CD14-positive monocyte (primary cell): ENCODE measurements at regions of chr12 and their contacts with region 1.

Region 1: GRCh38 chr12:54368709-54369583 is 4.7 kb upstream of the GPR84 start:
- DNase-seq: peak; percentile 81 to 89 (median 83)
- H3K4me3 ChIP-seq: peak overlapping the region in 2 of 3 experiments; percentile 5 to 66
- H3K4me3 Mint-ChIP-seq: peak overlapping the region; percentile 64 to 80
- H3K27ac ChIP-seq: peak overlapping the region; percentile 42 to 76
- H3K27ac Mint-ChIP-seq: peak overlapping the region; percentile 76 to 93 (median 86)
- H3K4me1 ChIP-seq: peaks cover 57 to 72% of the 10 kb centered on the region in 2 donors
- H3K4me1 Mint-ChIP-seq: peaks cover 72% of the 10 kb centered on the region
- H3K27me3 ChIP-seq: no peaks in the 10 kb centered on the region
- H3K27me3 Mint-ChIP-seq: peaks cover 0 to 2% (median 2%) of the 10 kb centered on the region in 3 donors
- CTCF ChIP-seq: peak; percentile 81

Region 2: GRCh38 chr12:54154681-54155186 is 214.2 kb before region 1 on chr12:
- intact Hi-C with region 1: no loop called
- DNase-seq: no peak
- H3K4me3 ChIP-seq: no peak overlapping the region
- H3K4me3 Mint-ChIP-seq: no peak overlapping the region
- H3K27ac ChIP-seq: no peak overlapping the region
- H3K27ac Mint-ChIP-seq: no peak overlapping the region
- H3K4me1 ChIP-seq: no peaks in the 10 kb centered on the region
- H3K4me1 Mint-ChIP-seq: no peaks in the 10 kb centered on the region
- H3K27me3 ChIP-seq: peaks cover 4 to 52% of the 10 kb centered on the region in 2 donors
- H3K27me3 Mint-ChIP-seq: peaks cover 39 to 58% (median 50%) of the 10 kb centered on the region in 3 donors
- CTCF ChIP-seq: no peak

Region 3: DNA sequence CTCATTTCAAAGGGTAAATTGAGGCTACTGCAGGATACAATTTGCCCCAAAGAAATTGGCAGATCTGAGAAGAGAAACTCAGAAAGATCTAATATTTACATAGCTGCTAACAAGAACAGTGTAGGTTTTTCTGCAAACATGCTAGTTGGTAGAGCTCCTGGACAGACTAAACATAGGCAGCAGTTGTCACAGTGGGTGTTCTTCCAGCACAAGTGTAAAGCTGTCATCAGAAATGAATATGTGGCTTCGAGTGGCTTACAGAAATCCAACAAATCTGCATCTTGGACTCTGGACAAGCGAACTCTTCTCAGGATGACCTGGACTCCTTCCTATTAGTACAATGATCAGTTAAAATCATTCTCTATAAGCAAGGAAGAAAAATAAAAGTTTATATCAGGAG is 95.0 kb before region 1 on chr12:
- intact Hi-C with region 1: no loop called
- DNase-seq: no peak
- H3K4me3 ChIP-seq: no peak overlapping the region
- H3K4me3 Mint-ChIP-seq: no peak overlapping the region
- H3K27ac ChIP-seq: no peak overlapping the region
- H3K27ac Mint-ChIP-seq: no peak overlapping the region
- H3K4me1 ChIP-seq: peaks cover 22 to 26% of the 10 kb centered on the region in 2 donors
- H3K4me1 Mint-ChIP-seq: peaks cover 18% of the 10 kb centered on the region
- H3K27me3 ChIP-seq: no peaks in the 10 kb centered on the region
- H3K27me3 Mint-ChIP-seq: peaks cover 0 to 1% (median 0%) of the 10 kb centered on the region in 3 donors
- CTCF ChIP-seq: no peak

Region 4: GRCh38 chr12:54294152-54294952 is 74.6 kb before region 1 on chr12:
- intact Hi-C with region 1: loop called (anchors 2 to 5 kb)
- DNase-seq: peak; percentile 63 to 75 (median 73)
- H3K4me3 ChIP-seq: peak overlapping the region in 1 of 3 experiments; percentile 99
- H3K4me3 Mint-ChIP-seq: peak overlapping the region; percentile 74 to 99
- H3K27ac ChIP-seq: peak overlapping the region; percentile 51 to 87
- H3K27ac Mint-ChIP-seq: peak overlapping the region; percentile 85 to 92 (median 88)
- H3K4me1 ChIP-seq: peaks cover 95 to 100% of the 10 kb centered on the region in 2 donors
- H3K4me1 Mint-ChIP-seq: peaks cover 89% of the 10 kb centered on the region
- H3K27me3 ChIP-seq: no peaks in the 10 kb centered on the region
- H3K27me3 Mint-ChIP-seq: no peaks in the 10 kb centered on the region
- CTCF ChIP-seq: peak; percentile 94

Region 5: GRCh38 chr12:54300732-54301427 is 68.1 kb before region 1 on chr12 and contains the start of gene NFE2:
- intact Hi-C with region 1: loop called in 1 of 2 experiments (anchors 5 kb)
- DNase-seq: peak; percentile 65 to 75 (median 66)
- H3K4me3 ChIP-seq: peak within 1 kb of the TSS; percentile 80 to 99 (median 93)
- H3K4me3 Mint-ChIP-seq: peak within 1 kb of the TSS; percentile 86 to 99
- H3K27ac ChIP-seq: peak within 1 kb of the TSS; percentile 63 to 87
- H3K27ac Mint-ChIP-seq: peak within 1 kb of the TSS; percentile 90 to 93 (median 91)
- H3K4me1 ChIP-seq: peaks cover 84 to 97% of the 10 kb centered on the region in 2 donors
- H3K4me1 Mint-ChIP-seq: peaks cover 79% of the 10 kb centered on the region
- H3K27me3 ChIP-seq: no peaks in the 10 kb centered on the region
- H3K27me3 Mint-ChIP-seq: peaks cover 0 to 1% (median 1%) of the 10 kb centered on the region in 3 donors
- CTCF ChIP-seq: no peak
- polyA plus RNA-seq, gene NFE2: 79.5 to 157 (median 95.6) TPM

Region 6: DNA sequence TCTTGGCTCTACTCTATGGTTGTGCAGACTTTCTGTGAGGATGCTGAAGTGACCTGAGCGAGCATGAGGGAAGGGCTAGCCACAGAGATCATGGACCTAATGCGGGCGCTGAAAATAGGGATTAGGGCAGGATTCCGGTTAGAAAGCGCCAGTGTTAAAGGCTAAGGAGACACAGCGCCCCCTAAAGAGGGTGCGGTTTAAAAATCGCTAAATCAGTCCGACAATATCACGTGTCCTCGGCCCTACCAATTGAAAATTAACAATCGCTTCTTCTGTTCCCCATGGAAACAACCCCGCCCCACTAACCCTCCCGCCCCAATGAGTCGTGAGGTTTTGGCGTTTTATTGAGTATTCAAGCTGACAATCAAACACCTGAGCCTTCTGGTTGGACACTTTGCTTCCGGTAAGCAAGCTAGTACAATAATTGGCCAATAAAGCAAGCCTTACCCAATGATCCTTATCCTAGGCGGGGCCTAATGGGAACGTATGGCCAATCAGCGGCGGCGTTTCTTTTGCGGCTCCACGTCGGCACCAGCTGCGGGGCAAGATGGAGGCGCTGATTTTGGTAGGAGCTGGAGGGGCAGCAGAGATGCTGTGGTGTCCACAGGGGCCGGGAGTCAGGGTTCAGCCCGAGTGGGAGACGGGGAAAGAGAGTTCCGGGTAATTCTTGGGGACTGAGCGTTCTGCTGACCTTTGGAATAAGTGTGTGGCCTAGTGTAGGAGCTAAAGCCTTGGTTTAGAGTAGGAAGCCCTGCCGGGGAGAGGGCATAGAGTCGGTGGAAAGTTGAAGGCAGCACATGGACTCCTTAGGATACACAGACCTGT is 44.1 kb before region 1 on chr12 and contains the start of gene COPZ1:
- intact Hi-C with region 1: loop called in 1 of 2 experiments (anchors 5 kb)
- DNase-seq: peak; percentile 98 to 99 (median 99)
- H3K4me3 ChIP-seq: peak within 1 kb of the TSS; percentile 50 to 96 (median 79)
- H3K4me3 Mint-ChIP-seq: peak within 1 kb of the TSS; percentile 95 to 99
- H3K27ac ChIP-seq: peak within 1 kb of the TSS; percentile 67 to 86
- H3K27ac Mint-ChIP-seq: peak within 1 kb of the TSS; percentile 98 to 99 (median 99)
- H3K4me1 ChIP-seq: peaks cover 49 to 68% of the 10 kb centered on the region in 2 donors
- H3K4me1 Mint-ChIP-seq: peaks cover 57% of the 10 kb centered on the region
- H3K27me3 ChIP-seq: no peaks in the 10 kb centered on the region
- H3K27me3 Mint-ChIP-seq: no peaks in the 10 kb centered on the region
- CTCF ChIP-seq: peak; percentile 87
- polyA plus RNA-seq, gene COPZ1: 78.9 to 190 (median 176) TPM

Region 7: GRCh38 chr12:54337280-54337842 is 31.6 kb before region 1 on chr12:
- intact Hi-C with region 1: loop called in 1 of 2 experiments (anchors 5 kb)
- DNase-seq: peak in 2 of 3 donors; percentile 23 to 27
- H3K4me3 ChIP-seq: no peak overlapping the region
- H3K4me3 Mint-ChIP-seq: no peak overlapping the region
- H3K27ac ChIP-seq: no peak overlapping the region
- H3K27ac Mint-ChIP-seq: peak overlapping the region in 5 of 7 donors; percentile 7 to 85 (median 59)
- H3K4me1 ChIP-seq: peaks cover 11 to 16% of the 10 kb centered on the region in 2 donors
- H3K4me1 Mint-ChIP-seq: peaks cover 24% of the 10 kb centered on the region
- H3K27me3 ChIP-seq: no peaks in the 10 kb centered on the region
- H3K27me3 Mint-ChIP-seq: no peaks in the 10 kb centered on the region
- CTCF ChIP-seq: no peak

Region 8: DNA sequence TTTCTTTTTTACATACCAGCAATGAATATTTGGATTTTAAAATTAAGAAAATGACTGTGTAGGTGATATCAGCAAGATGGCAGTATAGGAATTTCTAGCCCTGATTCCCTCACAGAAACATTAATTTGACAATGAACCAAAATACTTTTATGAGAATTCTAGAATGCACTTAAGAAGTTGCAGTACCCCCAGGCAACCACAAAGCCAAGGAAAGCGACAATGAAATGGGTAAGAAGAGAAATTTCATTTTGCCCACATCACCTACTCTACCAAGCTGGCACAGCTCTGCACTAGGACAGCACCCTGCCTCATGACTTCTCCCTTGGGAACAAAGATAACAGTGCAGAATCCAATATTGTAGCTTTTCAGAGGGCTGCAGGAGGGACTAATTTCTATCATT is 763.9 kb after region 1 on chr12:
- intact Hi-C with region 1: no loop called
- DNase-seq: no peak
- H3K4me3 ChIP-seq: no peak overlapping the region
- H3K4me3 Mint-ChIP-seq: no peak overlapping the region
- H3K27ac ChIP-seq: no peak overlapping the region
- H3K27ac Mint-ChIP-seq: no peak overlapping the region
- H3K4me1 ChIP-seq: no peaks in the 10 kb centered on the region
- H3K4me1 Mint-ChIP-seq: no peaks in the 10 kb centered on the region
- H3K27me3 ChIP-seq: peaks cover 2 to 3% of the 10 kb centered on the region in 2 donors
- H3K27me3 Mint-ChIP-seq: peaks cover 3 to 10% (median 3%) of the 10 kb centered on the region in 3 donors
- CTCF ChIP-seq: no peak